HepG2 (cell line): ENCODE measurements at regions of chr19 and their contacts with region 1.

Region 1: GRCh38 chr19:15629003-15629880 is 11.5 kb upstream of the CYP4F3 start:
- DNase-seq: peak; percentile 55
- ATAC-seq: peak; percentile 95
- H3K4me3 ChIP-seq: no peak overlapping the region
- H3K27ac ChIP-seq: no peak overlapping the region
- H3K4me1 ChIP-seq: peaks cover 7% of the 10 kb centered on the region; the same call in 1 of the 2 replicates
- H3K27me3 ChIP-seq: no peaks in the 10 kb centered on the region
- CTCF ChIP-seq: peak; percentile 94
- EP300 ChIP-seq: no peak
- POLR2A ChIP-seq: no peak
- RAD21 ChIP-seq: peak; percentile 94

Region 2: GRCh38 chr19:15672580-15673175 is 43.4 kb after region 1 on chr19 and contains the start of gene CYP4F12:
- CTCF ChIA-PET with region 1: interaction called, 3 read pairs
- POLR2A ChIA-PET with region 1: no interaction called
- in situ Hi-C with region 1: no loop called
- intact Hi-C with region 1: loop called (anchors 5 kb)
- DNase-seq: peak; percentile 76
- ATAC-seq: peak; percentile 86
- H3K4me3 ChIP-seq: peak within 1 kb of the TSS; percentile 52 to 70 (median 69)
- H3K27ac ChIP-seq: peak within 1 kb of the TSS; percentile 92
- H3K4me1 ChIP-seq: peaks cover 42% of the 10 kb centered on the region
- H3K27me3 ChIP-seq: no peaks in the 10 kb centered on the region
- CTCF ChIP-seq: no peak
- EP300 ChIP-seq: no peak
- POLR2A ChIP-seq: peak; percentile 56 to 77; a peak in 3 of 4 replicates
- RAD21 ChIP-seq: no peak
- total RNA-seq, gene CYP4F12: 7.2 and 30.8 TPM in 2 replicates

Region 3: DNA sequence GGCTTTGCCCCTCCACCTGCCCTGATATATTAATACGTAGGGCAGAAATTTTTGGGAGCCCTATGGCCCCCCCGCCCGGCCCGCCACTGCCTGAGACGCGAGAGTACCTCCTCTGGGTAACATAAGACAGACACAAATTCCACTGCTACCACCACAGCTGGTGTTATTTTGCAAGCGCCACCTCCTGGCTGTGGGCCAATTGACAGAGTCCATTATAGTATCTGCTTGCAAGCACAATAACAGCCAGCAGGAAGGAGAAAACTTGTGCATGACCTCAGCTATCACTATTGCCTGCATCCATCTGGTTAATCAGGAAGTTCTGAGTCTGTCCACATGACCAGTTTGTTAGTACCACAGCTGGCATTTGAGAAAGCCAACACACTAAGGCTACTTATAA is 73.3 kb after region 1 on chr19:
- CTCF ChIA-PET with region 1: interaction called, 10 read pairs
- POLR2A ChIA-PET with region 1: no interaction called
- in situ Hi-C with region 1: no loop called
- intact Hi-C with region 1: loop called (anchors 2 kb)
- DNase-seq: peak; percentile 83
- ATAC-seq: peak; percentile 86
- H3K4me3 ChIP-seq: peak overlapping the region in 1 of 3 experiments; percentile 43; a peak in 2 of 6 replicates
- H3K27ac ChIP-seq: peak overlapping the region; percentile 72
- H3K4me1 ChIP-seq: peaks cover 28% of the 10 kb centered on the region
- H3K27me3 ChIP-seq: no peaks in the 10 kb centered on the region
- CTCF ChIP-seq: peak; percentile 78
- EP300 ChIP-seq: no peak
- POLR2A ChIP-seq: no peak
- RAD21 ChIP-seq: peak; percentile 28; the same call in 1 of the 2 replicates

Region 4: DNA sequence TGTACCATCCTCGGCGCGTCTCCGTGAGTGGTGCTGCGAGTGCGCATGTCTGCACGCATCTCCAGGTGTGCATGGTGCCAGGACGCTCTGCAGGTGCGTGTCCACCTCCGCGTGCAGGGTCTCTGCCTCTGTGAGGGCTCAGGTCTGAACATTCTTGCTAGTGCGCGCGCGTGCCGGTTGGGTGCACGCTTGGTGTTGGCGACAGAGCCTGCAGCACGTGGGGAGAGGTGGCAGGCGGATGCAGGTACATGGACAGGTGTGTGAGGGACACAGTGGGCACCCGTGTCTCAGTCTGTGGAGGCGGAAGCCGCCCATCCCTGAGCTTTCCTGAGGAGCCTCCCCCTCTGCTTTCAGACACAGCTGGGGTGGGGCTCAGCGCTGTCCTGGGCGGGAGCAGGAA is 93.7 kb after region 1 on chr19:
- CTCF ChIA-PET with region 1: no interaction called
- POLR2A ChIA-PET with region 1: no interaction called
- in situ Hi-C with region 1: no loop called
- intact Hi-C with region 1: no loop called
- DNase-seq: no peak
- ATAC-seq: no peak
- H3K4me3 ChIP-seq: no peak overlapping the region
- H3K27ac ChIP-seq: no peak overlapping the region
- H3K4me1 ChIP-seq: no peaks in the 10 kb centered on the region
- H3K27me3 ChIP-seq: no peaks in the 10 kb centered on the region
- CTCF ChIP-seq: no peak
- EP300 ChIP-seq: no peak
- POLR2A ChIP-seq: no peak
- RAD21 ChIP-seq: no peak

Region 5: GRCh38 chr19:15759962-15760565 is 130.8 kb after region 1 on chr19:
- CTCF ChIA-PET with region 1: interaction called, 48 read pairs
- POLR2A ChIA-PET with region 1: no interaction called
- in situ Hi-C with region 1: loop called (anchors 5 kb)
- intact Hi-C with region 1: loop called (anchors 1 kb)
- DNase-seq: peak; percentile 34
- ATAC-seq: peak; percentile 80
- H3K4me3 ChIP-seq: no peak overlapping the region; a peak in 1 of 6 replicates
- H3K27ac ChIP-seq: no peak overlapping the region
- H3K4me1 ChIP-seq: no peaks in the 10 kb centered on the region
- H3K27me3 ChIP-seq: no peaks in the 10 kb centered on the region
- CTCF ChIP-seq: peak; percentile 79
- EP300 ChIP-seq: no peak
- POLR2A ChIP-seq: no peak
- RAD21 ChIP-seq: peak; percentile 79

Region 6: GRCh38 chr19:15869109-15869555 is 239.9 kb after region 1 on chr19:
- CTCF ChIA-PET with region 1: interaction called, 12 read pairs
- POLR2A ChIA-PET with region 1: no interaction called
- in situ Hi-C with region 1: no loop called
- intact Hi-C with region 1: loop called (anchors 1 kb)
- DNase-seq: peak; percentile 60
- ATAC-seq: peak; percentile 93
- H3K4me3 ChIP-seq: no peak overlapping the region
- H3K27ac ChIP-seq: no peak overlapping the region
- H3K4me1 ChIP-seq: 0 out of 2 replicates have a peak, but pooled peaks cover 12% of the 10 kb centered on the region
- H3K27me3 ChIP-seq: no peaks in the 10 kb centered on the region
- CTCF ChIP-seq: peak; percentile 72
- EP300 ChIP-seq: no peak
- POLR2A ChIP-seq: no peak
- RAD21 ChIP-seq: peak; percentile 57

Region 7: DNA sequence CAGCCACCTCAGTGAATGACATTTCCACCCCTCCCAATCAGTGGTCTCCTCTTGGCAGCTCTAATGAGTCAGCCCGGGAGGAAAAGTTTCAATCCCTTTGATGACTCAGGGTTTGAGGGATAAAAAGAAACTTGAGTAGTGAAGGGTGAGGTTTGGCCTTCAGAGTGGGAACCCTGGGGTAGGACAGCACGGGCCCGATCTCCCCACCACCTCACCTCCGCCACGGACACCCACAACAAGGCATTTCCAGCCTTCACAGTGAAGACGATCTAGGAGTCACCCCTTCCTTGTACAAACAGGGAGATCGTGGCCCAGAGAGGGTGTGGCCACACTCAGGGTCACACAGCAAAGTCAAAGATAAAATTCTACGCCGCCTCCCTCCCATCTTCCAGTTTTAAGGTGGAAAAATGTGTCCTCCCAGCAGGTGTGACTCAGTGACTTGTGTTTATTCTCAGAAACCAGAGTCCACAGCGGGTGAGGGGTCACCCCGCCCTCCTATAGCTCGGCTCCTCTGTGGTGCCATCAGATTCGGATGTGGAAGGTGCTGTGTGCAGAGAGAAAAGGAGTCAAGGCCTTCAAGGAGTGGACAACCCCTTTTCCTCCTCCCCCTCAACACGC is 531.8 kb after region 1 on chr19:
- CTCF ChIA-PET with region 1: no interaction called
- POLR2A ChIA-PET with region 1: no interaction called
- in situ Hi-C with region 1: loop called (anchors 25 kb)
- intact Hi-C with region 1: no loop called
- DNase-seq: peak; percentile 30
- ATAC-seq: no peak
- H3K4me3 ChIP-seq: no peak overlapping the region
- H3K27ac ChIP-seq: no peak overlapping the region
- H3K4me1 ChIP-seq: peaks cover 30% of the 10 kb centered on the region
- H3K27me3 ChIP-seq: no peaks in the 10 kb centered on the region
- CTCF ChIP-seq: no peak
- EP300 ChIP-seq: no peak
- POLR2A ChIP-seq: no peak
- RAD21 ChIP-seq: no peak